CD4-positive, alpha-beta memory T cell (primary cell): ENCODE measurements at regions of chr16 and their contacts with region 1.

Region 1: GRCh38 chr16:30429678-30430427 is at the start of gene DCTPP1:
- DNase-seq: peak; percentile 95 to 99 (median 98)
- H3K4me3 ChIP-seq: peak within 1 kb of the TSS; percentile 76 to 84
- H3K4me3 Mint-ChIP-seq: peak within 1 kb of the TSS in 1 of 8 donors; percentile 35
- H3K27ac ChIP-seq: peak within 1 kb of the TSS; percentile 72
- H3K27ac Mint-ChIP-seq: peak within 1 kb of the TSS in 2 of 7 donors; percentile 70 to 84
- H3K4me1 ChIP-seq: peaks cover 32% of the 10 kb centered on the region
- H3K4me1 Mint-ChIP-seq: peaks cover 17 to 28% (median 21%) of the 10 kb centered on the region in 4 donors
- H3K27me3 ChIP-seq: no peaks in the 10 kb centered on the region
- H3K27me3 Mint-ChIP-seq: no peaks in the 10 kb centered on the region
- total RNA-seq, gene DCTPP1: 15.0 to 18.0 TPM

Region 2: DNA sequence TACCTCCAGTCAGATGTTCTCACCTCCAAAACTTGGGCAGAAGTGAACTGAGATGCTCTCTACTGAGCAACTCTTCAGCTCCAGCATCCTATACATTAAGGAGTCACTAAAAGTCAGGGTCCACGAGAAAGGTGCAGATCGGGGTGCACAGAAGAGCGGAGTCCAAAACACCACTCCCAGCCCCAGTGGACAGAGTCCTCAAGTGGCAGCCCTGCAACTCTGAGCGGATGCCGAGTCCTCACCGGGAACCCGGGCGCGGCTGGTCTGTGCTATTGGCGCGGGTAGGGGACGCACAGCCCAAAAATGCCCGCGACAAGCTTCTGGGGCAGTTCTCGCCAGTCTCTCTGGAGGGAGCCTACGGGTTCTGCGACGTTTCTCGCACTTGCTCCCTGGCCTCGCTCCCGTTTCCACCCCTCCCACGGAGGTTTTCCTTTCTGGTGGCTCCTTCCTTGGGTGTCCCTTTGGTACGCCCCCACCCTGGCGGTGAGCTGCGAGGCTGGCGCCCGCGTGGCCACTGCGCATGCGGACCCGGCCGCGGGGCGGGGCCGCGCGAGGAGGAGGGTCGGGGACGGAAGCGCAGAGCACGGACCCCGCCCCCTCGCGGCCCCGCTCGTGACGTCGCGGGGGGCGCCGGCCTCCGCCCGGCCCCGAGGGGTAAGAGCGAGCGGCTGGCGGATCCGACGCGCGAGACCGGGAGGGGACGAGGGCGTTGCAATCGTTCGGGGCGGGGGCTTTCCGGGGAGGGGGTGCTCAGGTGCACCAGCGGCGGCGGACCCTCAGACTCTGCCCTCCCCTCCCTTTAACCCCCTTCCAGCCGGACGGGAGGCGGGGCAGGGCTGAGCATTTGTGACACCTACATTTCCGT is 468.1 kb before region 1 on chr16 and contains the start of gene TMEM219:
- CTCF ChIA-PET with region 1: no interaction called
- POLR2A ChIA-PET with region 1: no interaction called
- intact Hi-C with region 1: no loop called
- DNase-seq: peak; percentile 92 to 98 (median 95)
- H3K4me3 ChIP-seq: peak within 1 kb of the TSS; percentile 75 to 89
- H3K4me3 Mint-ChIP-seq: peak within 1 kb of the TSS; percentile 88 to 95 (median 92)
- H3K27ac ChIP-seq: peak within 1 kb of the TSS; percentile 87
- H3K27ac Mint-ChIP-seq: peak within 1 kb of the TSS; percentile 92 to 99 (median 96)
- H3K4me1 ChIP-seq: peaks cover 19% of the 10 kb centered on the region
- H3K4me1 Mint-ChIP-seq: peaks cover 11 to 30% (median 20%) of the 10 kb centered on the region in 4 donors
- H3K27me3 ChIP-seq: no peaks in the 10 kb centered on the region
- H3K27me3 Mint-ChIP-seq: no peaks in the 10 kb centered on the region
- total RNA-seq, gene TMEM219: 80.8 to 103 TPM

Region 3: GRCh38 chr16:30395155-30395991 is 34.5 kb before region 1 on chr16 and contains the start of gene ZNF48:
- CTCF ChIA-PET with region 1: no interaction called
- POLR2A ChIA-PET with region 1: interaction called, 11 read pairs
- intact Hi-C with region 1: no loop called
- DNase-seq: peak in 4 of 5 donors; percentile 44 to 65 (median 53)
- H3K4me3 ChIP-seq: peak within 1 kb of the TSS; percentile 18 to 73
- H3K4me3 Mint-ChIP-seq: peak within 1 kb of the TSS; percentile 83 to 96 (median 89)
- H3K27ac ChIP-seq: peak within 1 kb of the TSS; percentile 56
- H3K27ac Mint-ChIP-seq: peak within 1 kb of the TSS; percentile 58 to 92 (median 84)
- H3K4me1 ChIP-seq: peaks cover 32% of the 10 kb centered on the region
- H3K4me1 Mint-ChIP-seq: peaks cover 15 to 39% (median 26%) of the 10 kb centered on the region in 4 donors
- H3K27me3 ChIP-seq: no peaks in the 10 kb centered on the region
- H3K27me3 Mint-ChIP-seq: no peaks in the 10 kb centered on the region
- total RNA-seq, gene ZNF48: 15.8 to 16.7 TPM

Region 4: GRCh38 chr16:30458561-30459394 is 28.9 kb after region 1 on chr16:
- CTCF ChIA-PET with region 1: interaction called, 12 read pairs
- POLR2A ChIA-PET with region 1: interaction called, 16 read pairs
- intact Hi-C with region 1: no loop called
- DNase-seq: peak; percentile 72 to 85 (median 76)
- H3K4me3 ChIP-seq: peak overlapping the region in 1 of 2 donors; percentile 19
- H3K4me3 Mint-ChIP-seq: peak overlapping the region; percentile 64 to 81 (median 70)
- H3K27ac ChIP-seq: peak overlapping the region; percentile 48
- H3K27ac Mint-ChIP-seq: peak overlapping the region; percentile 87 to 95 (median 89)
- H3K4me1 ChIP-seq: peaks cover 35% of the 10 kb centered on the region
- H3K4me1 Mint-ChIP-seq: peaks cover 18 to 49% (median 31%) of the 10 kb centered on the region in 4 donors
- H3K27me3 ChIP-seq: no peaks in the 10 kb centered on the region
- H3K27me3 Mint-ChIP-seq: no peaks in the 10 kb centered on the region

Region 5: DNA sequence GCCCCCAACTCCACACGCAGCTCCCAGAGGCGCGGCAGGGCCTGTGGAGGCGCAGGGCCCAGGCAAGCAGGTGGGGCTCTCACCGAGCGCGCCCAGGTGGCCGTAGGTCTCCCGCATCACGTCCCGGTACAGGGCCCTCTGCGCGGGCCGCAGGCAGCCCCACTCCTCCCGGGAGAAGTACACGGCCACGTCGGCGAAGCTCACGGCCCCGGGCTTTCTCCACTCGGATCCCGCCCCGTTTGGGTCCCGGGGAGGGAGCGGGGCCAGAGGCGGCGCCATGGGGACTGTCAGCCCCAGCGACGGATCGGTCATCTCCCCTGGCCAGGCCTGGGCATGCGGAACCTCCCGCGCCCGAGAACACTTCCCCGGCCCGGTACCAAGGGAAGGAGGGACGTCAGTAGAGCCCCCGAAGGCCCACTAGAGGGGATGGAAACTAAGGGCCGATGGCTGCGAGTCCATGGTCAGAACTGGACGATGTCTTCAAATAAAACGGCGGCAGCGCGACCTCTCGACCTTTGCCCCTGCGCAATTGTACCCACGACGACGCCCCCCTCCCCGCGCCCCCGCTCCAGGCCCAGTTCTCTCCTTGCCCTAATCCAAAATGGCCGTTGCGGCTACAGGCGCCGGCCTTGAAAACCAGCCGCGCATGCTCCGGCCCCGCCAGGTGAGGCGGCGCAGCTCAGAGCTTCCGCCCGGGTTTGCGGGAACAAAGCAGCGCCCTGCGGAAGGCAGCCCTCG is 104.7 kb after region 1 on chr16 and contains the start of gene ZNF747:
- CTCF ChIA-PET with region 1: interaction called, 39 read pairs
- POLR2A ChIA-PET with region 1: interaction called, 40 read pairs
- intact Hi-C with region 1: loop called (anchors 1 kb)
- DNase-seq: peak; percentile 89 to 92 (median 90)
- H3K4me3 ChIP-seq: peak within 1 kb of the TSS; percentile 86 to 92
- H3K4me3 Mint-ChIP-seq: peak within 1 kb of the TSS; percentile 87 to 99 (median 93)
- H3K27ac ChIP-seq: peak within 1 kb of the TSS; percentile 91
- H3K27ac Mint-ChIP-seq: peak within 1 kb of the TSS; percentile 94 to 99 (median 97)
- H3K4me1 ChIP-seq: peaks cover 42% of the 10 kb centered on the region
- H3K4me1 Mint-ChIP-seq: peaks cover 15 to 51% (median 31%) of the 10 kb centered on the region in 4 donors
- H3K27me3 ChIP-seq: no peaks in the 10 kb centered on the region
- H3K27me3 Mint-ChIP-seq: no peaks in the 10 kb centered on the region
- total RNA-seq, gene ZNF747: 15.7 to 17.8 TPM

Region 6: DNA sequence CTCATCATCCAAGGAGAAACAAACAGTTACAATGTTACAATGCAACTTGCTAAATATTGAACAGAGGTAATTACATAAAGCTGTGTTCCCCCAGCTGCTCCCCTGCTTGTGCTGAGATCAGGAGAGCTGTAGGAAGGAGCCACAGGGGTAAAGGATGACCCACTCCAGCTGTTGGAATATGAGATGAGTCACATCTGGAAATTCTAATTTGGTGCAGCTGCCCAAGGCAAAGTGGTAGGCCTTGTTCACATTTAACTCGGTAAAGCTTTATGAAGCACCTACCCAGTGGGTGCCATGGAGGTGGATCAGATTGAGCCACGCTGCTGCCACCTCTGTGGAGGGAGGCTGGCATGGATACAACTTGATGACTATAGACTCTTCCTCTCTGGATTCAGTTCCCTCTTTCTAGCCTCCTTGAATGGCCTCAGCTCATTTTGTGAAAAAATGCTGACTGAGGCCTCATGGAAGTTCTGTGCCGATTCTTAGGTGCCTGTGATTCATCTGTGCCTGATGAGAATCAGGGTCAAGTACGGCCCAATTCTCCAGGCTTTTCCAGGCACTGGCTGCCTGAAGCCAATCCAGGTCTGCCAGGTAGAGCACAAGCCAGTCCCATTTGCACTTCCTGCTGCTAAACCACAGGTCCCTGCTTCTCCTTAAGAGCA is 172.9 kb after region 1 on chr16:
- CTCF ChIA-PET with region 1: interaction called, 18 read pairs
- POLR2A ChIA-PET with region 1: interaction called, 8 read pairs
- intact Hi-C with region 1: loop called (anchors 1 kb)
- DNase-seq: no peak
- H3K4me3 ChIP-seq: no peak overlapping the region
- H3K4me3 Mint-ChIP-seq: no peak overlapping the region
- H3K27ac ChIP-seq: no peak overlapping the region
- H3K27ac Mint-ChIP-seq: peak overlapping the region in 3 of 7 donors; percentile 23 to 52 (median 42)
- H3K4me1 ChIP-seq: peaks cover 3% of the 10 kb centered on the region
- H3K4me1 Mint-ChIP-seq: peaks cover 2 to 9% (median 5%) of the 10 kb centered on the region in 4 donors
- H3K27me3 ChIP-seq: no peaks in the 10 kb centered on the region
- H3K27me3 Mint-ChIP-seq: no peaks in the 10 kb centered on the region

Region 7: GRCh38 chr16:30650369-30651123 is 220.7 kb after region 1 on chr16 and contains the start of gene PRR14:
- CTCF ChIA-PET with region 1: interaction called, 3 read pairs
- POLR2A ChIA-PET with region 1: interaction called, 10 read pairs
- intact Hi-C with region 1: no loop called
- DNase-seq: peak; percentile 96 to 99 (median 97)
- H3K4me3 ChIP-seq: peak within 1 kb of the TSS; percentile 99
- H3K4me3 Mint-ChIP-seq: peak within 1 kb of the TSS; percentile 95 to 100 (median 99)
- H3K27ac ChIP-seq: peak within 1 kb of the TSS; percentile 96
- H3K27ac Mint-ChIP-seq: peak within 1 kb of the TSS; percentile 97 to 100 (median 99)
- H3K4me1 ChIP-seq: peaks cover 20% of the 10 kb centered on the region
- H3K4me1 Mint-ChIP-seq: peaks cover 11 to 32% (median 18%) of the 10 kb centered on the region in 4 donors
- H3K27me3 ChIP-seq: no peaks in the 10 kb centered on the region
- H3K27me3 Mint-ChIP-seq: peaks cover 0 to 2% of the 10 kb centered on the region in 2 donors
- total RNA-seq, gene PRR14: 92.0 to 100 TPM

Region 8: DNA sequence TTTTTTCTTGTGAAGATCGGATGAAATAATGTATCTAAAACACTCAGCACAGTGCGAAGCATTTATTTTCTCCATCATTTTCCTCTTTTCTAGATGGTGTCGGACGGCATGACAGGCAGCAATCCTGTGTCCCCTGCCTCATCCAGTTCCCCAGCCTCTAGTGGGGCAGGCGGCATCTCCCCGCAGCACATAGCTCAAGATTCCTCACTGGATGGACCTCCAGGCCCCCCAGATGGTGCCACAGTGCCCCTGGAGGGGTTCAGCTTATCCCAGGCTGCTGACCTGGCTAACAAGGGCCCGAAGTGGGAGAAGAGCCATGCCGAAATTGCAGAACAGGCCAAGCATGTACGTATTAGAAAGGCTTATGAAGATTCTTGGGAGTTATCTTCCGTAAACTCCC is 274.1 kb after region 1 on chr16:
- CTCF ChIA-PET with region 1: no interaction called
- POLR2A ChIA-PET with region 1: no interaction called
- intact Hi-C with region 1: no loop called
- DNase-seq: no peak
- H3K4me3 ChIP-seq: no peak overlapping the region
- H3K4me3 Mint-ChIP-seq: no peak overlapping the region
- H3K27ac ChIP-seq: no peak overlapping the region
- H3K27ac Mint-ChIP-seq: no peak overlapping the region
- H3K4me1 ChIP-seq: peaks cover 19% of the 10 kb centered on the region
- H3K4me1 Mint-ChIP-seq: peaks cover 13 to 28% (median 14%) of the 10 kb centered on the region in 4 donors
- H3K27me3 ChIP-seq: no peaks in the 10 kb centered on the region
- H3K27me3 Mint-ChIP-seq: no peaks in the 10 kb centered on the region